ENCODE measurements at regions of chr19 and their contacts with region 1.

Region 1: GRCh38 chr19:9140159-9140874 is at the start of gene ZNF317:
- H3K4me3 Mint-ChIP-seq: peak within 1 kb of the TSS; percentile 98
- H3K27ac Mint-ChIP-seq: peak within 1 kb of the TSS; percentile 92
- H3K4me1 Mint-ChIP-seq: peaks cover 38% of the 10 kb centered on the region
- H3K27me3 Mint-ChIP-seq: peaks cover 5% of the 10 kb centered on the region

Region 2: DNA sequence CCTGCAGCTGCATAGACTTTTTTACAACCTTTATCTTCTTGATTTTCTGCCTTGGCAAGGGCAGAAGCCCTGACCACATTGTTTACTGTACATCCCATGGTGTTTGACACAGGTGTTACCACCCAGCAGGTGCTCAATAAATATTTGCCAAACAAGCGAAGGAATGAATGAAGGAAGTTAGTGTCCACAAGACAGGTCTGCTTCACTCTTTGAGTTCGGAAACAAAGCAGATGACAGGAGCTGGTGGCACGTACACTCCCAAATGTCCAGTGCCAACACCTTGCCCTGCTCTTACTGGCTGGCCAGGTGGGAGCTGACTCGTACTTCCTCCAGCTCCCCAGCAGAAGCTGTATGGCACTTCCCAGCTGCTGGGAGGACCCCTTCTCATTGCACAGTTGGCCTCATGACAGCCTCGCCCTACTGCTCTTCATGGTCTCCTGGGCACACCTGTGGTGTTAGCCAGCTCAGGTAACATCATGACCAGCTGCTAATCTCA is 108.1 kb before region 1 on chr19:
- intact Hi-C with region 1: no loop called
- H3K4me3 Mint-ChIP-seq: no peak overlapping the region
- H3K27ac Mint-ChIP-seq: no peak overlapping the region
- H3K4me1 Mint-ChIP-seq: no peaks in the 10 kb centered on the region
- H3K27me3 Mint-ChIP-seq: peaks cover 2% of the 10 kb centered on the region

Region 3: GRCh38 chr19:9171393-9171991 is 31.2 kb after region 1 on chr19:
- intact Hi-C with region 1: no loop called
- H3K4me3 Mint-ChIP-seq: peak overlapping the region; percentile 7
- H3K27ac Mint-ChIP-seq: peak overlapping the region; percentile 86
- H3K4me1 Mint-ChIP-seq: peaks cover 80% of the 10 kb centered on the region
- H3K27me3 Mint-ChIP-seq: no peaks in the 10 kb centered on the region

Region 4: GRCh38 chr19:9205501-9206113 is 65.3 kb after region 1 on chr19:
- intact Hi-C with region 1: loop called (anchors 2 kb)
- H3K4me3 Mint-ChIP-seq: peak overlapping the region; percentile 46
- H3K27ac Mint-ChIP-seq: peak overlapping the region; percentile 22
- H3K4me1 Mint-ChIP-seq: peaks cover 18% of the 10 kb centered on the region
- H3K27me3 Mint-ChIP-seq: peaks cover 33% of the 10 kb centered on the region

Region 5: GRCh38 chr19:9309139-9309973 is 169.0 kb after region 1 on chr19 and contains the start of gene ZNF699:
- intact Hi-C with region 1: loop called (anchors 1 kb)
- H3K4me3 Mint-ChIP-seq: peak within 1 kb of the TSS; percentile 92
- H3K27ac Mint-ChIP-seq: peak within 1 kb of the TSS; percentile 98
- H3K4me1 Mint-ChIP-seq: peaks cover 22% of the 10 kb centered on the region
- H3K27me3 Mint-ChIP-seq: peaks cover 2% of the 10 kb centered on the region

Region 6: DNA sequence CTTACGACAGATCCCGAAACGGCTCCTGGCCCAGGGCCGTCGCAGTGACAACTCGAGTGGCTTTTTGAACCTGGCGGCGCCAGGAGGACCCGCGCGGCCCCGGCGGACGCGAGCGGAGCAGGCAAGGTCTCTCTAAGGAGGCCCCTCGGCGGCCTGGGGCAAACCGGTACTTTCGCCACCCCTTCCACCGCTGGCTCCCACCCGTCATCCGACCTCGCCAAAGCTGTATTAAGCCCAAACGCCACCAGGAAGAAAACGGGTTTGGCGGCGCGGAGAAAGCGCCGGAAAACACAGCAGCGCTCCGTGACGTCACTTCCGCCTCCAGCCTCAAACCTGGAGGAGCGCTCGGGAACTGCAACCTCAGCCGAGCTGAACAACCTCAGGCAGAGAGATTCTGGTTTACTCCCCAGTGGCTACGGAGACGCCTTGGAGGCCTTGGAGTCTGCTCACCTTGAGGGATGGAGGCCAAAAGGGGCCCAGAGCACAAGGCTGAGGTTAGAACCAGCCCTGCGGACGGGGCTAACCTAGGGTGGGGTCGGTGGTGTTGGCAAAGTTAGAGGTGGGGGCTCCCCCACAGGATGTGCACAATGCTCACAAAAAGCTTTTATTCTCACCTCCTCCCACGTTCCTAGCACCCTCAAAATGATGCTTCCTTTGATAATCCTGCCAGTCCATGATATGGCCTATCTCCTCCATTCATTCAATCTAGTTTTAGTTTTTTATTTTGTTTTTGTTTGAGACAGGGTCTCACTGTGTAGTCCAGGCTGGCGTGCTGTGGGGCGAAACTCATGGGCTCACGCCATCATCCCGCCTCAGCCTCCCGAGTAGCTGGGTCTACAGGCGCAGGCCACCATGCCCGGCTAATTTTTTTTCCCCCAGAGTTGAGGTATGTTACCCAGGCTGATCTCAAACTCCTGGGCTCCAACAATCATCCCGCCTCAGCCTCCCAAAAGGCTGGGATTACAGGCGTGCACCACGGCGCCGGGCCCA is 295.3 kb after region 1 on chr19 and contains the start of gene ZNF266:
- intact Hi-C with region 1: loop called (anchors 5 kb)
- H3K4me3 Mint-ChIP-seq: peak within 1 kb of the TSS; percentile 88
- H3K27ac Mint-ChIP-seq: peak within 1 kb of the TSS; percentile 91
- H3K4me1 Mint-ChIP-seq: peaks cover 28% of the 10 kb centered on the region
- H3K27me3 Mint-ChIP-seq: no peaks in the 10 kb centered on the region